CD4-positive, alpha-beta memory T cell (primary cell): ENCODE measurements at regions of chr9 and their contacts with region 1.

Region 1: GRCh38 chr9:92293452-92294296 is at the start of gene IARS1:
- DNase-seq: peak; percentile 98 to 100 (median 99)
- H3K4me3 ChIP-seq: peak within 1 kb of the TSS; percentile 66 to 77
- H3K4me3 Mint-ChIP-seq: peak within 1 kb of the TSS; percentile 97 to 100 (median 98)
- H3K27ac ChIP-seq: peak within 1 kb of the TSS; percentile 66
- H3K27ac Mint-ChIP-seq: peak within 1 kb of the TSS; percentile 98 to 99 (median 99)
- H3K4me1 ChIP-seq: peaks cover 49% of the 10 kb centered on the region
- H3K4me1 Mint-ChIP-seq: peaks cover 33 to 84% (median 61%) of the 10 kb centered on the region in 4 donors
- H3K27me3 ChIP-seq: no peaks in the 10 kb centered on the region
- H3K27me3 Mint-ChIP-seq: no peaks in the 10 kb centered on the region
- total RNA-seq, gene IARS1: 109 to 112 TPM

Region 2: DNA sequence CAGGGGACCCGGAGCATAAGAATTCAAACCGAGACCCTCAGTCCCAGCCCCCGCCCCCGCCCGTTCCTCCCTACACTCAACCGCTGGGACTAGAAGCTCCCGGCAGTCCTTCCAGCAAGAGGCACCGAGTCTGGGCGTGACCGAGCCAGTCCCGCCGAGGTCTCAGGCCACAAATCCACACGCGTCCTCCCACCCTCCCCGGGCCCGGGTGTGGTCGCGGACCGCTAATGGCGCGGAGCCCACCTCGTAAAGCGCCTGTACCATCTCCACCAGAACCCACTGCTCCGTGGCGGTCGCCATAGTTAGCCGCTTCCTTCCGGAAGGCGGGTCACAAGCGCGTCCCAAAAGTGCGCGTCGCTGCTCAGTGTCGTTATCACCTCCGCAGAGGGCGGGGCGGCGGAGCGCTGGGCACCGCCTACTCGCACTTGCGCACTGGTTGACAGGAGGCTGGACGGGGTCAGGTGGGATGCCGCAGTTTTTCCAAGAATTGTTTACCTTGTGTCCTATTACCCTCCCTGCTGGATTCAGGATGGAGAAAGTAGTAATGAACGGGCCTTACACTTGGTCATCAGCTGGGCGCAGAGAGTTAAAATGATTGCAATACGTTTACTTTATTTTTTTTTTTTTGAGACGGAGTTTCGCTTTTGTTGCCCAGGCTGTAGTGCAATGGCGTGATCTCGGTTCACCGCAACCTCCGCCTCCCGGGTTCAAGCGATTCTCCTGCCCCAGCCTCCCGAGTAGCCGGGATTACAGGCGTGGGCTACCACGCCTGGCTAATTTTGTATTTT is 178.4 kb before region 1 on chr9 and contains the start of gene SPTLC1:
- CTCF ChIA-PET with region 1: no interaction called
- POLR2A ChIA-PET with region 1: no interaction called
- intact Hi-C with region 1: loop called (anchors 1 kb)
- DNase-seq: peak; percentile 90 to 95 (median 94)
- H3K4me3 ChIP-seq: peak within 1 kb of the TSS; percentile 66 to 90
- H3K4me3 Mint-ChIP-seq: peak within 1 kb of the TSS; percentile 97 to 99 (median 99)
- H3K27ac ChIP-seq: peak within 1 kb of the TSS; percentile 89
- H3K27ac Mint-ChIP-seq: peak within 1 kb of the TSS; percentile 96 to 100 (median 99)
- H3K4me1 ChIP-seq: peaks cover 26% of the 10 kb centered on the region
- H3K4me1 Mint-ChIP-seq: peaks cover 26 to 48% (median 34%) of the 10 kb centered on the region in 4 donors
- H3K27me3 ChIP-seq: no peaks in the 10 kb centered on the region
- H3K27me3 Mint-ChIP-seq: no peaks in the 10 kb centered on the region
- total RNA-seq, gene SPTLC1: 56.8 to 57.9 TPM

Region 3: DNA sequence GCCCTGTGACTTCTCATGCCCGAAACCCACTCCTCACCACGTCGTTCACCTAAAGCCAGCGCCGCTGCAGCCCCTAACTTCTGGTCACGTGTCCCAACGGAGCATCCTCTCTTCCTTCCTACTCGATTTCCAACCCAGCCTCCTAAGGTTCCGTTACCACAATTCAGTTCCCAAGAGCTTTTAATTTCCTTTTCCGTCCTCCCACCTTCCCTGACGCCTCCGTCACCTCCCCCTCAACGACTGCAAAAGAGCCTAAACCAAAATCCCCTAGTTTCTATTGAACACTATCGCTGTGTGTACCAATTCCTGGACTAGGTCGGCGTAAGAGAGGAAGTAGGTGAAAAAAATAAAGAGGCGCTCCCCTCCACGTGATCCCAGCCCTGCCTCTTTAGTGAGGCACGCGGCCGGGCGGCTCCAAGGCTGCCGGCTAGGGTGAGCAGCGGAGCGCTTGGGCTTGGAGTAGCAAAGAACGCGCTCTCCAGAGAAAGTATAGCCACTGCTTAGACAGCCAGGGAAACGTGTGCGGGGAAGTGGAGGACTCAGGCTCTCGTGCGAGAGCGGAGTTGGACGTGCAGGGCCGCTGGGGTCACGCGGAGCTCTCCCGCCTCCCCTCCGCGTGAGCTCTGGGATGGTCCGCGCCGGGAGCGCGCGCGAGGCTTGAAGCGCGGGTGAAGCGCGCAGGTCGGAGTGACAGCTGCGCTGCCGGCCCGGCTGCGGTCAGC is 31.8 kb after region 1 on chr9 and contains the starts of genes CENPP and NOL8:
- CTCF ChIA-PET with region 1: interaction called, 4 read pairs
- POLR2A ChIA-PET with region 1: interaction called, 18 read pairs
- intact Hi-C with region 1: loop called (anchors 1 kb)
- DNase-seq: peak; percentile 89 to 91 (median 91)
- H3K4me3 ChIP-seq: peak within 1 kb of the TSS; percentile 97 to 100
- H3K4me3 Mint-ChIP-seq: peak within 1 kb of the TSS; percentile 95 to 99 (median 98)
- H3K27ac ChIP-seq: peak within 1 kb of the TSS; percentile 92
- H3K27ac Mint-ChIP-seq: peak within 1 kb of the TSS; percentile 91 to 100 (median 99)
- H3K4me1 ChIP-seq: peaks cover 26% of the 10 kb centered on the region
- H3K4me1 Mint-ChIP-seq: peaks cover 8 to 41% (median 30%) of the 10 kb centered on the region in 4 donors
- H3K27me3 ChIP-seq: no peaks in the 10 kb centered on the region
- H3K27me3 Mint-ChIP-seq: no peaks in the 10 kb centered on the region
- total RNA-seq, gene CENPP: 0.55 to 4.3 TPM
- total RNA-seq, gene NOL8: 93.9 to 104 TPM

Region 4: DNA sequence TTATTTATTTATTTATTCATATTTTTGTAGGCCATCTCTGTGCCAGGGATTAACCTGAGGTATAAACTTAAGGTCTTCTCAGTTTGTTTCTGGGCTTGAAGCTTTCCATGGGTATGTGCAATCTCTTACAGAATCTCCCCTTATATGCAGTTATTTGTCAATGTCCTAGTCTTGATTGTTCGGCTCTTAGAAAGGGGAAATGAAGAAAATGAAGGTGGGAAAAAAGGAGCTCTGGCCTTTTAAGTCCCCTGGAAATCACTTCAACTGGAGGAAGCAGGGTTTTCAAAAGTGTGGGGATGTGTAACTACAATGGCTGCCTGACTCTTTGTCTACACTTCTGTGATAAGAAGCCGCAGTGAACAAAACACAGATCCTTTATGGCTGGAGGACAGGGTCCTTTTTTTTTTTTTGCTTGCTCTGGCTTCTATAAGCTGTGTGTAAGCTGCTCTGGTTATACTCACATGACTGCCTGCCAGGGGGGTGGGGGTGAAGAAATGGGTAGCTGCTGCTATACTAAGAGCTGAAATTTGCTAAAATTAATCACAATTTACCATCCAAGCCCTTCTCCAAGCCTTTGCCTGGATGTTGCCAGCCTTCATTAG is 65.8 kb after region 1 on chr9:
- CTCF ChIA-PET with region 1: no interaction called
- POLR2A ChIA-PET with region 1: no interaction called
- intact Hi-C with region 1: no loop called
- DNase-seq: no peak
- H3K4me3 ChIP-seq: no peak overlapping the region
- H3K4me3 Mint-ChIP-seq: no peak overlapping the region
- H3K27ac ChIP-seq: no peak overlapping the region
- H3K27ac Mint-ChIP-seq: no peak overlapping the region
- H3K4me1 ChIP-seq: no peaks in the 10 kb centered on the region
- H3K4me1 Mint-ChIP-seq: peaks cover 0 to 2% (median 0%) of the 10 kb centered on the region in 4 donors
- H3K27me3 ChIP-seq: no peaks in the 10 kb centered on the region
- H3K27me3 Mint-ChIP-seq: no peaks in the 10 kb centered on the region

Region 5: DNA sequence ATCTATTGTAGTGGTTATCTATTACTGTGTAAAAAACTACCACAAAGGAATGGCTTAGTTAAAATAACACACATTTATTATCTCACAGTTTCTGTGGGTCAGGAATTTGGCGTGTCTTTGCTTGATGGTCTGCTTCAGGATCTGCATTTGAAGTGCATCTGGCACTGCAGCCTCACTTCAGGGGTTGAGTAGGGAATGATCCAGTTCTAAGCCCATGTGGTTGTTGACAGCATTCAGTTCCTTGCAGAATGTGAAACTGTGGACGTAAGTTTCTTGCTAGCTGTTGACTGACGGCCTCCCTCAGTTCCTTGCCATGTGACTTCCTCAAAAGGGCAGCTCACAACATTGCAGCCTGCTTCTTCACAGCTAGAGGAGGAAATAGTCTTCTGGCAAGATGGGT is 112.8 kb after region 1 on chr9:
- CTCF ChIA-PET with region 1: no interaction called
- POLR2A ChIA-PET with region 1: no interaction called
- intact Hi-C with region 1: no loop called
- DNase-seq: peak; percentile 29 to 42 (median 32)
- H3K4me3 ChIP-seq: peak overlapping the region in 1 of 2 donors; percentile 62
- H3K4me3 Mint-ChIP-seq: peak overlapping the region; percentile 32 to 78 (median 64)
- H3K27ac ChIP-seq: no peak overlapping the region
- H3K27ac Mint-ChIP-seq: peak overlapping the region; percentile 47 to 89 (median 81)
- H3K4me1 ChIP-seq: peaks cover 33% of the 10 kb centered on the region
- H3K4me1 Mint-ChIP-seq: peaks cover 19 to 28% (median 22%) of the 10 kb centered on the region in 4 donors
- H3K27me3 ChIP-seq: no peaks in the 10 kb centered on the region
- H3K27me3 Mint-ChIP-seq: no peaks in the 10 kb centered on the region

Region 6: DNA sequence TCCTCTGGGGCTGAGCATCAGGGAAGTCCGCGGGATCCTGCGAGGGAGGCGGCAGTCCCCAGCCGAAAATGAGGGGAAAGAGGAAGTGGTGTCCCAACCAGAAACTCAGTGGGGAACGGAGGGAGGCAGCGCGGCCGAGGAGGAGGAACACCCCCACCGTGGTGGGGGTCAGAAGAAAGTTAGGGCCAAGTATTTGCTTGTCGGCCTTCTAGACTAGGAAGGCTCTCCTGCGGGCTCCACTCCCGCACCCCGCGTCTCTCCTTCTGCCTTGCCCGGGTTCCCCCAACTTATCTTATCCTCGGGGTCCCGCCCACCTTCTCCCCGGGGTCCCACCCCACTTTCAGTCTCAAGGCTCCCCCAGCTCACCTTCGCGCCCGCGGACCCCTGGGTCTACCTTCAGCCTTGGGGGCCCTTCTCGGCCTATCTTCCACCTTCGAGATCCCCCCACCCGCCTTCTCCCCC is 1282.2 kb after region 1 on chr9:
- CTCF ChIA-PET with region 1: no interaction called
- POLR2A ChIA-PET with region 1: no interaction called
- intact Hi-C with region 1: loop called (anchors 5 kb)
- DNase-seq: peak; percentile 42 to 68 (median 48)
- H3K4me3 ChIP-seq: peak overlapping the region; percentile 47 to 69
- H3K4me3 Mint-ChIP-seq: peak overlapping the region; percentile 89 to 93 (median 92)
- H3K27ac ChIP-seq: peak overlapping the region; percentile 71
- H3K27ac Mint-ChIP-seq: peak overlapping the region; percentile 92 to 96 (median 95)
- H3K4me1 ChIP-seq: peaks cover 45% of the 10 kb centered on the region
- H3K4me1 Mint-ChIP-seq: peaks cover 32 to 69% (median 43%) of the 10 kb centered on the region in 4 donors
- H3K27me3 ChIP-seq: no peaks in the 10 kb centered on the region
- H3K27me3 Mint-ChIP-seq: no peaks in the 10 kb centered on the region